Activated T-helper 1 cell treated with anti-CD3 and anti-CD28 coated beads, Interleukin-12 subunit alpha, Interleukin-12 subunit beta, Interleukin-2, Interleukin-4 antibody, amounts not matched to agents 30 ng/mL and 10 ng/mL and 1 ng/mL, durations not matched to agents 14 hours and 24 hours and 36 hours (primary cell): ENCODE measurements at regions of chr9 and their contacts with region 1.

Region 1: DNA sequence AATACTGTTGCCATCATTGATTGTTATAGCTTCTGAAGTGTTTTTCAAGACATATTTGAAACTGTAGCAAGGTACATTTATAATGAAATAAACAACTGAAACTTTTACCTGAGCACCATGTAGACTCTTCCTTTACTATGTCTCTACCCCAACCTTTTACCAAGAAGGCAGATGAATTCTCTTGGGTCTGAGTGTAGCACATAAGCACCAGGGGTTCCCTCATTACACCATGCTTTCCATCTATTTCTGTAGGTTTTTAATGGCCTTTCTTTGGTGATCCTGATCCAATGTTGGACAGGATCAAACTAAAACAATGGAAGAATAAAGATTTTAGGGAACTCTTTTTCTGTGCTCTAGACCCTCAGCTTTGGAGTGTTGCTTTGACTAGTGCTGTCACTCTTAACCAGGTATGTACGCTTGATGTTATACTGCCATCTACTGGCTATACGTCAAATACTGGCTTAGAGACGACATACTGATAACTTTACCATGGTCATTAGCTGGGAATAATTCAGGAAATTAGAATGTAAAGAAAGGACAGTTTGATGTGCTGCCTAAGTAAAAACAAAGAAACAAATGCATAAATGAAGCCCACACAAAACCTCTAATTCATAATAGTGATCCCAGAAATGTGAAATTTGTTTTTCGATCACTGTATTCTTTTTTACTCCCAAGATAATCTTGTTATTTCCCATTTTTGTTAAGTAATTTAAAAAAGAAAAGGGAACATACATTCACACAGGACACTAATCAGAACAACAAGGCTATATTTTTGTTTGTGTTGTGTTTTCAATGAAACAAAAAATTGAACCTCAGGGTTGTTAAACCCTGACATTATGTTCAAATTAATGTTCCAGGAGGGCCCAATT is 30.7 kb downstream of the IFNW1 start:
- DNase-seq: no peak
- H3K4me3 Mint-ChIP-seq: no peak overlapping the region
- H3K27ac Mint-ChIP-seq: no peak overlapping the region
- H3K4me1 Mint-ChIP-seq: no peaks in the 10 kb centered on the region
- H3K27me3 Mint-ChIP-seq: peaks cover 9% of the 10 kb centered on the region

Region 2: DNA sequence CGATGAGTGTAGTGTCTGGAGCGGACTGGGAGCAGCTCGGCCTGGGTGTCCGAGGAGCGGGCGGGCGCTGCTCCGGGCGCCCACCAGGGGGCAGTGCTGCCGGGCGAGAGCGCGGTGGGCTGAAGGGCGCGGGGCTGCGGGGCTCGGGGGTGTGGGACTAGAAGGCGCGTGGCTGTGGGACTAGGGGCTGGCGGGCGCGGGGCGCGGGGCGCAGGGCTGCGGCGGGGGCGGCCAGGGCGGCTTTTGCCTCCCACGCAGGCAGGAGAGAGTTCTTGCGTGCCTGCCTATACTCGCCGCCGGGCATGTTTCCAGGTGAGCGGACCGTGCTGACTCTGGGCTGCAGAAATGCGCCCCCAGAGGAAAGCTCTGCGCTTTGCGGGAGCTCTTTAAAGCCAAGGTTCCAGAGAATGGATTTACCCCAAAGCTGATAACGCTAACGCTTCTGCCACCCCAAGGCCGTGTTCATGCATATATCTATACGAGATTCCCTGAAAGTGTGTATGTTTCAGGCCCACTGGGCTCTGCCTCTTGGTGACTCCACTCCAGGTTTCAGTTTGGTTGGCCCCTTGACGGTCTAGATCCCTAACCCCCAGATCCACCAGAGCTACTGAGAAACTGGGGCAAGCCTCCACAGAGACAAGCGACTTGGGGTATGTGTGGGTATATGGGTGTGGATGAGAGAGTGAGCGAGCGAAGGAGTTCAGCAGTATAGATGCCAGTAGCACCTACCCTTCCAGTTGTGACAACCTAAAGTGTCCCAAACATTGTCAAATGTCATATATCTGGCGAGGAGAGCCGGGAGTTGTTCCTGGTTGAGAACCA is 1646.0 kb before region 1 on chr9:
- intact Hi-C with region 1: loop called (anchors 10 kb)
- DNase-seq: peak; percentile 64
- H3K4me3 Mint-ChIP-seq: peak overlapping the region; percentile 85
- H3K27ac Mint-ChIP-seq: no peak overlapping the region
- H3K4me1 Mint-ChIP-seq: peaks cover 18% of the 10 kb centered on the region
- H3K27me3 Mint-ChIP-seq: peaks cover 8% of the 10 kb centered on the region

Region 3: GRCh38 chr9:19925817-19926503 is 1185.0 kb before region 1 on chr9:
- intact Hi-C with region 1: loop called (anchors 1 kb)
- DNase-seq: peak; percentile 79
- H3K4me3 Mint-ChIP-seq: peak overlapping the region; percentile 65
- H3K27ac Mint-ChIP-seq: peak overlapping the region; percentile 2
- H3K4me1 Mint-ChIP-seq: peaks cover 28% of the 10 kb centered on the region
- H3K27me3 Mint-ChIP-seq: peaks cover 2% of the 10 kb centered on the region

Region 4: GRCh38 chr9:20884985-20885593 is 225.9 kb before region 1 on chr9:
- intact Hi-C with region 1: loop called (anchors 1 kb)
- DNase-seq: peak; percentile 12
- H3K4me3 Mint-ChIP-seq: no peak overlapping the region
- H3K27ac Mint-ChIP-seq: no peak overlapping the region
- H3K4me1 Mint-ChIP-seq: no peaks in the 10 kb centered on the region
- H3K27me3 Mint-ChIP-seq: no peaks in the 10 kb centered on the region

Region 5: DNA sequence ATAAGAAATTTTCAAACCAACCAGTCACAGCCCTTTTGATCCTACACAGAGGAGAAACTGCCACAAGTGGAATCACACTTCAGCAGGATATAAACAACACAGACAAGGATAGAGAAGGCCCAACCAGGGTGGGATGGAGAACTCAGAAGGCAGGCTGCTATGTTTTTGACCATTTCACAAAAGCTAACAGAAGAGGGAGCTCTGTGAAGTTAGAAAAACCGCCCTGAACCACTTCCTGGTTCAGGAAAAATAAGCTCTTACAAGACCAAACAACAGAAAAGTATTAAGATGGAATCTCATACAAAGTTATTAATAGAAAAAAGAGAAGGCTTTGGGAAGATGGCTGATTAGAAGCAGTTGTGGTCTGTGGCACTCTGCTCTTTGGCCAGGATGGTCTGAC is 32.2 kb before region 1 on chr9:
- intact Hi-C with region 1: loop called (anchors 5 kb)
- DNase-seq: no peak
- H3K4me3 Mint-ChIP-seq: no peak overlapping the region
- H3K27ac Mint-ChIP-seq: no peak overlapping the region
- H3K4me1 Mint-ChIP-seq: peaks cover 32% of the 10 kb centered on the region
- H3K27me3 Mint-ChIP-seq: peaks cover 16% of the 10 kb centered on the region